ENCODE measurements at regions of chr9 and their contacts with region 1.

Region 1: DNA sequence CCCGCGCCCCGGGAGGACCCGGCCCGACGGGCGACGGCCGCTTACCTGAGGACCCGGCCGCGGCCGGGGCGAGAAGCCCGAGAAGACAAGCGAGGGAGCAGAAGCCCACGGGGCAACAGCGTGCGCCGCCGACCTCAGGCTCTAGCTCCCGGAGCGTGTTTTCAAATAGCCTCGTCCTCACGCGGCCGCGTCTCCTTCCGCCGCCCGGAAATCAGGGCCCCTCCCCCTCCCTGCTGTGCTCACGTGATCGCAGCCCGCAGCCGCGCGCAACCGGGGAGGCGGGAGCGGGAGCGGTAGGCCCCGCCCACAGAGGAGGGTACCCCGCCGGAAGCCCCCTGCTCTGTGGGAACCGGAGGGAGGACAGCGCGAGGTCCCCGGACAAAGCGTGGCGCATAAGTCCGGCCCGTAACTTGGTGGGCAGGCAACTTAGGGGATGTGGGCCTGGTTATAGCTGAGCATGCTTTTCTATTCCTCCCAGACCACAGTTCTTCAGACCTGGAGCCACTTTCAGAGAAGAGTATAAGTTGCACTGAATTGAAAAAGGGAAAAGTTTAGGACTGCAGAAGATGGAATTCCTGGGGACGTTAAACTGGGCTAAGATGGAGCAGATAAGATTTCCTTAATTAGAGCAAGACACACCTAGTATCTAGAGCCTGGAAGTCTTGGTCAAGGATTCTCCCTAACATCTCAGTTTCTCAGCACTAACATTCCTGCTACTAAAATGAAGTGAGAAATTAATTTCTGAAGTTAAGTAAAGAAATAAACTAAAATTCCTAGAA is at the start of gene TEX10:
- DNase-seq: peak; percentile 94
- ATAC-seq: peak; percentile 99
- H3K4me3 ChIP-seq: peak within 1 kb of the TSS; percentile 92
- H3K27ac ChIP-seq: peak within 1 kb of the TSS; percentile 81
- H3K4me1 ChIP-seq: peaks cover 12% of the 10 kb centered on the region
- H3K27me3 ChIP-seq: no peaks in the 10 kb centered on the region
- CTCF ChIP-seq: no peak
- total RNA-seq, gene TEX10: 13.0 TPM

Region 2: DNA sequence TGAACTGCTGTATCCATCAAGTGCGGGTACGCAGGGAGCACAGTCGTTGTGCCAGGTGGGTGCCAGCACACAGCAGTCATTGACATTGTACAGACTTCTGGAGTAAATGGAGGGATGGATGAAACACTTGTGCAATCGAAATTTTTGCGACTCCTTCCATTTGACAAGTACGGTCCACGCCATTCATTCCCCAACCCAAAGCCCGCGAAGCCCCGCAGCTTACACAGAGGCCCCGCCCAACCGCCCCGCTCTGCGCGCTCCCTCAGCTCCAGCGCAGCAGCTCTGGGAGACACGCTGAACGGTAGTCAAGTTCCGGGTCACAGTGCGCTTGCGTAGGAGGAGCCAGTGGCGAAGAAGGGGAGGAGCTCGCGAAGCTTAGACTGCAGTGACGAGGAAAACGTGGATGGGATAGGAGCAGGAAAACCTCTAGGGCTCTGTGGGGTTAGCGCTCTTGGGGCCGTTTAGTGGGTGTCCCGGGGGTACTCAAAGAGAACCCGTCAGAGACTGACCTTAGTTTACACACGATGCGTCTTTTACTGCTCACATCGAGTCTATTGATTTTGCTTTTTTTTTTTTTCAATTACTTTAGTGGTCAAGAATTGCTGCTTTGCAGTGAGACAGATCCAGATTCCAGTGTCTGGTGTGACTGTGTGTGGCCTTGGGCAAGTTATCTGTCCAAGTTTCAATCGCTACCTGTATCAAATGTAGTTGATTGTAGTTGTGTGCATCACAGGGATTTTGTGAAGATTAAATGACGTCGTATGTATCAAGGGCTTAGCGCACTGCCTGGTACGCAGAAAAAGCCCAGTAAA is 58.8 kb after region 1 on chr9:
- intact Hi-C with region 1: loop called (anchors 10 kb)
- DNase-seq: peak; percentile 95
- ATAC-seq: peak; percentile 100
- H3K4me3 ChIP-seq: peak overlapping the region; percentile 67
- H3K27ac ChIP-seq: peak overlapping the region; percentile 18
- H3K4me1 ChIP-seq: peaks cover 7% of the 10 kb centered on the region
- H3K27me3 ChIP-seq: peaks cover 7% of the 10 kb centered on the region
- CTCF ChIP-seq: no peak

Measured in upper lobe of right lung (tissue), 1 donor.